K562 (cell line): ENCODE measurements at regions of chr3 and their contacts with region 1.

Region 1: GRCh38 chr3:24185738-24186384 is 240.8 kb downstream of the NR1D2 start:
- DNase-seq: peak; percentile 88 to 94 (median 90)
- ATAC-seq: peak; percentile 98
- H3K4me3 ChIP-seq: no peak overlapping the region
- H3K27ac ChIP-seq: peak overlapping the region; percentile 76
- H3K4me1 ChIP-seq: peaks cover 4 to 8% of the 10 kb centered on the region in 2 experiments; a peak in 3 of 5 replicates
- H3K27me3 ChIP-seq: no peaks in the 10 kb centered on the region
- CTCF ChIP-seq: peak; percentile 92 to 93 (median 92)
- EP300 ChIP-seq: peak; percentile 87
- POLR2A ChIP-seq: no peak
- RAD21 ChIP-seq: peak; percentile 61 to 84

Region 2: GRCh38 chr3:24336101-24336500 is 150.2 kb after region 1 on chr3:
- CTCF ChIA-PET with region 1: no interaction called
- POLR2A ChIA-PET with region 1: no interaction called
- in situ Hi-C with region 1: no loop called
- intact Hi-C with region 1: loop called (anchors 5 kb)
- DNase-seq: no peak
- ATAC-seq: peak; percentile 49
- H3K4me3 ChIP-seq: no peak overlapping the region
- H3K27ac ChIP-seq: no peak overlapping the region
- H3K4me1 ChIP-seq: peaks cover 3 to 4% of the 10 kb centered on the region in 2 experiments; a peak in 3 of 5 replicates
- H3K27me3 ChIP-seq: no peaks in the 10 kb centered on the region
- CTCF ChIP-seq: no peak
- EP300 ChIP-seq: no peak
- POLR2A ChIP-seq: no peak
- RAD21 ChIP-seq: no peak